ENCODE measurements at regions of chr2 and their contacts with region 1.

Region 1: GRCh38 chr2:108583903-108584520 is 49.7 kb downstream of the LIMS1 start:
- DNase-seq: peak; percentile 82
- ATAC-seq: peak; percentile 96
- H3K4me3 ChIP-seq: no peak overlapping the region
- H3K27ac ChIP-seq: no peak overlapping the region
- H3K4me1 ChIP-seq: peaks cover 18% of the 10 kb centered on the region
- H3K27me3 ChIP-seq: no peaks in the 10 kb centered on the region
- CTCF ChIP-seq: peak; percentile 95
- EP300 ChIP-seq: no peak
- POLR2A ChIP-seq: no peak
- RAD21 ChIP-seq: peak; percentile 94

Region 2: GRCh38 chr2:108215794-108216211 is 368.2 kb before region 1 on chr2:
- CTCF ChIA-PET with region 1: no interaction called
- POLR2A ChIA-PET with region 1: no interaction called
- in situ Hi-C with region 1: loop called (anchors 25 kb)
- intact Hi-C with region 1: loop called (anchors 1 kb)
- DNase-seq: peak; percentile 55
- ATAC-seq: peak; percentile 98
- H3K4me3 ChIP-seq: peak overlapping the region; percentile 19 to 55 (median 19); a peak in 3 of 6 replicates
- H3K27ac ChIP-seq: no peak overlapping the region
- H3K4me1 ChIP-seq: peaks cover 22% of the 10 kb centered on the region
- H3K27me3 ChIP-seq: no peaks in the 10 kb centered on the region
- CTCF ChIP-seq: peak; percentile 84
- EP300 ChIP-seq: no peak
- POLR2A ChIP-seq: no peak
- RAD21 ChIP-seq: peak; percentile 67

Region 3: GRCh38 chr2:108351889-108352288 is 232.1 kb before region 1 on chr2:
- CTCF ChIA-PET with region 1: interaction called, 23 read pairs
- POLR2A ChIA-PET with region 1: no interaction called
- in situ Hi-C with region 1: loop called (anchors 5 kb)
- intact Hi-C with region 1: loop called (anchors 1 kb)
- DNase-seq: no peak
- ATAC-seq: no peak
- H3K4me3 ChIP-seq: no peak overlapping the region
- H3K27ac ChIP-seq: no peak overlapping the region
- H3K4me1 ChIP-seq: no peaks in the 10 kb centered on the region
- H3K27me3 ChIP-seq: peaks cover 0 to 5% of the 10 kb centered on the region in 2 experiments; a peak in 2 of 5 replicates
- CTCF ChIP-seq: no peak
- EP300 ChIP-seq: no peak
- POLR2A ChIP-seq: no peak
- RAD21 ChIP-seq: no peak

Region 4: DNA sequence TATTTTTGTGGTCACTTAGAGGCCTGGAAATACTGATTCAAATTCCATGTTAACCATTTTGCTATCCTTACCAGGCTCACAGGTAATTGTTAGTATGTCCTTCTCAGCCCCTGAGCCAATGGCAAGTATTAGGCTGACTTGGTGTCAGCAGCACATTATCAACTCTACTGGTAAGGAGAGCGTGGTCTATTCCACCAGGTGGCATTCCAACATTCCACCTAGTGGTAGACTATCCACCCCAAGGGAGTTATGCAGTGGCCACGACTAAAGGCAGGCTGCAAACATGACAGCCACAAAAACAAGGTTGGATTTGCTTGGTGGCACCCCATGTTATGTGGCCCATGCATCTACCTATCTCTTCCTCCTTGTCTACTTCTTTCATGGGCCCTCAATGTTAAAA is 166.8 kb before region 1 on chr2:
- CTCF ChIA-PET with region 1: interaction called, 26 read pairs
- POLR2A ChIA-PET with region 1: no interaction called
- in situ Hi-C with region 1: loop called (anchors 5 kb)
- intact Hi-C with region 1: loop called (anchors 1 kb)
- DNase-seq: peak; percentile 80
- ATAC-seq: peak; percentile 100
- H3K4me3 ChIP-seq: no peak overlapping the region
- H3K27ac ChIP-seq: no peak overlapping the region
- H3K4me1 ChIP-seq: peaks cover 23% of the 10 kb centered on the region
- H3K27me3 ChIP-seq: no peaks in the 10 kb centered on the region
- CTCF ChIP-seq: peak; percentile 93
- EP300 ChIP-seq: no peak
- POLR2A ChIP-seq: no peak
- RAD21 ChIP-seq: peak; percentile 84

Region 5: DNA sequence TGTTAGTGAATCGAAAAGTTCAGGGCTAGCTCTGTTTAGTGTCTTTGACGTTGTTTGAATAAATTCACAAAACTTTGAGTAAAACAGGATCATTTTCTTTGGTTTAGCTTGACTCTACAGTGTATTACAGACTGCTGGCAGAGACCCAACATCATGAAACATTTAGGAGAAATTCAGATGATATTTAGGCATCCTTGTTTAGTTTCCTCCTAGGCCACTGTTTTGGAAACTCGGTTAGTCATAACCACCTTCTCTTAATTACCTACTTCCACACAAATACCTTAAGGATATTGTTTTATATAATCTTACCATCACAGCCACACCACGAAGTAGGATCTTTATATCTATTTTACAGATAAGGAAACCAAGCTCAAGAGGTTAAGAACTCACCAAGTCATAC is 41.9 kb before region 1 on chr2:
- CTCF ChIA-PET with region 1: no interaction called
- POLR2A ChIA-PET with region 1: no interaction called
- in situ Hi-C with region 1: no loop called
- intact Hi-C with region 1: loop called (anchors 2 kb)
- DNase-seq: no peak
- ATAC-seq: no peak
- H3K4me3 ChIP-seq: no peak overlapping the region
- H3K27ac ChIP-seq: no peak overlapping the region
- H3K4me1 ChIP-seq: peaks cover 49% of the 10 kb centered on the region
- H3K27me3 ChIP-seq: no peaks in the 10 kb centered on the region
- CTCF ChIP-seq: no peak
- EP300 ChIP-seq: no peak
- POLR2A ChIP-seq: no peak
- RAD21 ChIP-seq: no peak